A549 (cell line): ENCODE measurements at regions of chr2 and their contacts with region 1.

Region 1: GRCh38 chr2:118003396-118003824 is 10.5 kb downstream of the CCDC93 start:
- DNase-seq: peak; percentile 20 to 80
- ATAC-seq: peak; percentile 93 to 99
- H3K4me3 ChIP-seq: no peak overlapping the region
- H3K27ac ChIP-seq: no peak overlapping the region
- H3K4me1 ChIP-seq: no peaks in the 10 kb centered on the region
- CTCF ChIP-seq: peak; percentile 93
- EP300 ChIP-seq: no peak
- POLR2A ChIP-seq: no peak
- RAD21 ChIP-seq: peak; percentile 86 to 90

Region 2: DNA sequence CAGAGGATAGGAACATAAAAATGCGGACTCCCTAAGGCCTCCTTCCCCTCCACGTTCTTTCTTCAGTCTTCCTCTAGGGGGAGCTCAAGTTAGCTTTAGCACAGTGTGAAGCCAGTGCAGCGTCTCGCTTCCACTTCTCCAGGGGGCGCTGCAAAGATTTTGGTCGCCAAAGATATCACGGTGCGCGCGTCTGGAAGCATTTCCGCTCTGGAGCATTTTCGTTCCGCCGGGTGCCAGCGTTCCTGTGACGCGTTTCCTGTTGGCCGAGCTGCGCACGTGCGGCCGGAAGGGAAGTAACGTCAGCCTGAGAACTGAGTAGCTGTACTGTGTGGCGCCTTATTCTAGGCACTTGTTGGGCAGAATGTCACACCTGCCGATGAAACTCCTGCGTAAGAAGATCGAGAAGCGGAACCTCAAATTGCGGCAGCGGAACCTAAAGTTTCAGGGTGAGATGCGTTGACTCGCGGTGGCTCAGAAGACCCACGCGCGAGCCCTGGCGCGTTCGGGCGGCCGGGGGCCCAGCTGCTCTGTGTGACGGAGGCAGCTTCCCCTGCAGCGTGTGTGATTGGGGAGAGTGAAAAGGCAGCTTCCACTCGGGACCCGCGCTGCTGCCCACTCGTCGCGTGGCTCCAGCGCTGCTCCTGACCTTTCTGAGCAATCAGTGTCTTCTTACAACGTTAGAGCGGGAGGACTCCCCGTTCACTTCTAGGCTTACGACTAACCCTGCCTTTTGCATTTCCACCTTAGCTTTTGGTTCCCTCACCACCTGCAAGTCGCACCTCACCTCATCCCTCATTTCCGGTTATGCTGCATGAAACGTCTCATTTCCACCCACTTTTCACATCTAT is 188.8 kb before region 1 on chr2 and contains the start of gene DDX18:
- CTCF ChIA-PET with region 1: interaction called, 137 read pairs
- POLR2A ChIA-PET with region 1: interaction called, 7 read pairs
- DNase-seq: peak; percentile 50 to 98
- ATAC-seq: peak; percentile 99
- H3K4me3 ChIP-seq: peak within 1 kb of the TSS; percentile 85
- H3K27ac ChIP-seq: peak within 1 kb of the TSS; percentile 86 to 88
- H3K4me1 ChIP-seq: peaks cover 15% of the 10 kb centered on the region; the same call in 2 of the 3 replicates
- CTCF ChIP-seq: peak; percentile 99
- EP300 ChIP-seq: no peak
- POLR2A ChIP-seq: peak; percentile 75
- RAD21 ChIP-seq: peak; percentile 79 to 84
- polyA plus RNA-seq, gene DDX18: 106 and 115 TPM in 2 replicates

Region 3: GRCh38 chr2:117835990-117836760 is 167.2 kb before region 1 on chr2:
- CTCF ChIA-PET with region 1: interaction called, 92 read pairs
- POLR2A ChIA-PET with region 1: no interaction called
- DNase-seq: peak; percentile 34 to 42
- ATAC-seq: peak; percentile 79 to 89
- H3K4me3 ChIP-seq: no peak overlapping the region
- H3K27ac ChIP-seq: no peak overlapping the region
- H3K4me1 ChIP-seq: no peaks in the 10 kb centered on the region
- CTCF ChIP-seq: peak; percentile 58
- EP300 ChIP-seq: no peak
- POLR2A ChIP-seq: no peak
- RAD21 ChIP-seq: peak; percentile 59 to 64; a peak in 4 of 5 replicates

Region 4: GRCh38 chr2:117936871-117937428 is 66.5 kb before region 1 on chr2:
- CTCF ChIA-PET with region 1: interaction called, 18 read pairs
- POLR2A ChIA-PET with region 1: no interaction called
- DNase-seq: no peak
- ATAC-seq: no peak
- H3K4me3 ChIP-seq: no peak overlapping the region
- H3K27ac ChIP-seq: no peak overlapping the region
- H3K4me1 ChIP-seq: no peaks in the 10 kb centered on the region
- CTCF ChIP-seq: no peak
- EP300 ChIP-seq: no peak
- POLR2A ChIP-seq: no peak
- RAD21 ChIP-seq: no peak

Region 5: GRCh38 chr2:117948615-117949014 is 54.8 kb before region 1 on chr2:
- CTCF ChIA-PET with region 1: interaction called, 32 read pairs
- POLR2A ChIA-PET with region 1: no interaction called
- DNase-seq: no peak
- ATAC-seq: no peak
- H3K4me3 ChIP-seq: no peak overlapping the region
- H3K27ac ChIP-seq: no peak overlapping the region
- H3K4me1 ChIP-seq: 0 out of 3 replicates have a peak, but pooled peaks cover under 1% of the 10 kb centered on the region
- CTCF ChIP-seq: no peak
- EP300 ChIP-seq: no peak
- POLR2A ChIP-seq: no peak
- RAD21 ChIP-seq: no peak

Region 6: GRCh38 chr2:117972425-117973138 is 30.8 kb before region 1 on chr2:
- CTCF ChIA-PET with region 1: interaction called, 48 read pairs
- POLR2A ChIA-PET with region 1: no interaction called
- DNase-seq: peak in 1 of 2 experiments; percentile 14
- ATAC-seq: peak; percentile 45 to 52; a peak in 3 of 6 replicates
- H3K4me3 ChIP-seq: no peak overlapping the region
- H3K27ac ChIP-seq: 0 out of 6 replicates have a peak overlapping the region, but pooled peaks of 1 of the 2 experiments have one; percentile 21
- H3K4me1 ChIP-seq: peaks cover 6% of the 10 kb centered on the region; the same call in 1 of the 3 replicates
- CTCF ChIP-seq: no peak
- EP300 ChIP-seq: no peak
- POLR2A ChIP-seq: no peak
- RAD21 ChIP-seq: no peak

Region 7: DNA sequence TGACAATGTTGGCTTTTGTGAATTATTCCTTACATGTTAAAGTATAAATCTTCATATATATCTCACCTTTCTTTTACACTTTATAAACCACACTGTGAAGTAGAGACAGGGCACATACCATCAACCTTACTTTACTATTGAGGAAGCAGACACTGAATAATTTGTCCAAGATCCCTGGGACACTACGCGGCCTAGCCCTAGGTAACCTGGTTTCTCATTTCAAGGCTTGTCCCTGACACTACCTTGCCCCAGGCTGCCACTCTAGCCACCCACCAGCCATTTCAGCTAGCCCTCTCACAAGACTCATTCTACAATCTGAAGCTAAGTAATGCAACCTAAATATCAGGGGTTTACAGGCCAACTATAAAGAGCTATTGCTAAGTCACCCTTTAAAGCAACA is 16.3 kb before region 1 on chr2:
- CTCF ChIA-PET with region 1: interaction called, 81 read pairs
- POLR2A ChIA-PET with region 1: no interaction called
- DNase-seq: no peak
- ATAC-seq: no peak
- H3K4me3 ChIP-seq: no peak overlapping the region
- H3K27ac ChIP-seq: no peak overlapping the region
- H3K4me1 ChIP-seq: peaks cover 13% of the 10 kb centered on the region; the same call in 2 of the 3 replicates
- CTCF ChIP-seq: no peak
- EP300 ChIP-seq: no peak
- POLR2A ChIP-seq: no peak
- RAD21 ChIP-seq: no peak